G401 (cell line): ENCODE measurements at regions of chr7 and their contacts with region 1.

Region 1: DNA sequence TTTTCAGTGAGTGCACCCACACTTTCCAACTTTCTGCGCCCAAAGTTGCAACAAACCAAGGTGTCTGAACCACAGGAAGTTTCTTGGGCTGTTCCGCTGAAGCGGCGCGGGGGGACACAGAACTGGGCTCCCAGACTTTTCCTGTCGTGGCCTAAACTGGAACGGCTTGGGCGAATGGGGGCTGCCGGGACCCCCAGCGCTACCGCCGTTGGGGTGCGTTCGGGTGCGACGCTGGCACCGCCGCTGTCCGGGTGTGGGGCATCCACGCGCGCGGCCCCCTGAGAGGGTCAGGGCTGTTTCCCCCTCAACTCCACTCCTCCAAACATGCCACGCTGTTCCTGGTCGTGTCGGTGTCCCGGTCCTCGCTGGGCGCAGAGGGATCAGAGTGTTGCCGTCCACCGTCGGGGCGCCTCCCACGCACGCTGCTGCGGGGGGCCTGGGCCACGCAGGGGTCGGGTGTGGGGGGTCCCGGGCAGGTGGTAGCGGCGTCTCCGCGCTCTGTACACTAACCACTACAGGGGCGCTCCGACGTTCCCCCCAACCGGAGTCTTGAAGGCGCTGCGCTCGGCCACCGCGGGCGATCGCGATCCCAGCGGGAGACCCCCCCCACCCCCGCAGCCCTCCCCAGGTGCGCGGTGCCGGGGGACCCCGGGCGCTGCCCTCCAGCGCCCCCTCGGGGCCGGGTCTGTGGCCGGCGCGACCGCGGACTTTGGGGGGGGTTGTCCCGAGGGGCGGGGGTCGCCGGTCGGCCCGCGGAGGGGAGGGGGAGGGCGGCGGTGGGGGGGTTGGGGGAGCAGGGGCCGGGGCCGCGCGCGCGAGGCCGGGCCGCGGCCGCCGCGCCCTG is 2.2 kb upstream of the CUX1 start:
- DNase-seq: no peak

Region 2: GRCh38 chr7:101746314-101746713 is 68.9 kb before region 1 on chr7:
- in situ Hi-C with region 1: loop called (anchors 5 kb)
- DNase-seq: no peak